Natural killer cell (primary cell): ENCODE measurements at regions of chr11 and their contacts with region 1.

Region 1: GRCh38 chr11:14519917-14520746 is at the start of gene PSMA1:
- DNase-seq: peak; percentile 86 to 94
- ATAC-seq: peak; percentile 90 to 98 (median 94)
- H3K4me3 ChIP-seq: peak within 1 kb of the TSS; percentile 77
- H3K4me3 Mint-ChIP-seq: peak within 1 kb of the TSS; percentile 97
- H3K27ac ChIP-seq: peak within 1 kb of the TSS; percentile 87
- H3K27ac Mint-ChIP-seq: peak within 1 kb of the TSS; percentile 95 to 97
- H3K4me1 ChIP-seq: peaks cover 6% of the 10 kb centered on the region
- H3K4me1 Mint-ChIP-seq: peaks cover 26 to 28% of the 10 kb centered on the region in 2 donors
- H3K27me3 ChIP-seq: no peaks in the 10 kb centered on the region
- H3K27me3 Mint-ChIP-seq: no peaks in the 10 kb centered on the region
- CTCF ChIP-seq: no peak
- total RNA-seq, gene PSMA1: 143 to 176 (median 155) TPM

Region 2: DNA sequence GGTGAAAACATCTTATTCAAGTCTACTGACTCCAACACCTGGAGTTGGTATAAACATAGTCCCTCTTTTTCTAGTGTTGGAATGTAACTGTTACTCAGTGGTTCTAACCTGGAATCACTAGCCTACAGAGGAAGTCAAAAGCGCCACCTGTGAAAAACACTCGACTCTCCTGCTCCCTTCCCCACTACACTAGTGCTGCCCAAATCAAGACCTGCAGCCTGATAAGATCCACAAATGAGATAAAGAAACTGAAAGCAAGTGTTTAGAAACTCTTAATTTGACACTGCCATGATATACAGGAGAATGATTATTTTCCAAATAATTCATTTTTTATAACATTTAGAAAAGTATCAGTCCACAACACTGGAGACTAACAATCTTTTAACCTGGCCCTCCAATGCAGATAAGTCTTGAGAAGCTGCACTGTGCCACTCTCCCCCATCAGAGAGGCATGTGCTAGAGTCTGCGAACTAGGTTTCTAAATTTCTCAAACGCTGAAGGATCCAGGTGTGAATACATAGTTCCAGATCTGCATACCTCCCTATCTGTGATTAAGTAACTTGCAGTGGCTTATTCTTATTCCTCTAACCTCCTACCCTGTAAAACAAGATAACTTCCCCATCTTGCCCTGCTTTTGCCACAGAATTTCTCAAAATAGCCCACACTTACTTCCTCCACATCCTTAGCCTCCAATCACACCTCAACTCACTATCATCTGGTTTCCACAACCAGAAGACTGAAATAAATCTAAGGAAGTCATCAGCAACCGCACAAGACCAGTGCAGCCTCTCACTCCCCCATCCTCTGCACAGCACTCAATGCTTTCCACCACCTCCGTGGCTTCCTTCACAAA is 249.2 kb before region 1 on chr11:
- intact Hi-C with region 1: no loop called
- DNase-seq: peak in 1 of 2 donors; percentile 47
- ATAC-seq: peak; percentile 72 to 81 (median 76)
- H3K4me3 ChIP-seq: no peak overlapping the region
- H3K4me3 Mint-ChIP-seq: peak overlapping the region; percentile 78
- H3K27ac ChIP-seq: peak overlapping the region; percentile 28
- H3K27ac Mint-ChIP-seq: peak overlapping the region; percentile 49 to 80
- H3K4me1 ChIP-seq: peaks cover 20% of the 10 kb centered on the region
- H3K4me1 Mint-ChIP-seq: peaks cover 28 to 48% of the 10 kb centered on the region in 2 donors
- H3K27me3 ChIP-seq: no peaks in the 10 kb centered on the region
- H3K27me3 Mint-ChIP-seq: no peaks in the 10 kb centered on the region
- CTCF ChIP-seq: no peak

Region 3: DNA sequence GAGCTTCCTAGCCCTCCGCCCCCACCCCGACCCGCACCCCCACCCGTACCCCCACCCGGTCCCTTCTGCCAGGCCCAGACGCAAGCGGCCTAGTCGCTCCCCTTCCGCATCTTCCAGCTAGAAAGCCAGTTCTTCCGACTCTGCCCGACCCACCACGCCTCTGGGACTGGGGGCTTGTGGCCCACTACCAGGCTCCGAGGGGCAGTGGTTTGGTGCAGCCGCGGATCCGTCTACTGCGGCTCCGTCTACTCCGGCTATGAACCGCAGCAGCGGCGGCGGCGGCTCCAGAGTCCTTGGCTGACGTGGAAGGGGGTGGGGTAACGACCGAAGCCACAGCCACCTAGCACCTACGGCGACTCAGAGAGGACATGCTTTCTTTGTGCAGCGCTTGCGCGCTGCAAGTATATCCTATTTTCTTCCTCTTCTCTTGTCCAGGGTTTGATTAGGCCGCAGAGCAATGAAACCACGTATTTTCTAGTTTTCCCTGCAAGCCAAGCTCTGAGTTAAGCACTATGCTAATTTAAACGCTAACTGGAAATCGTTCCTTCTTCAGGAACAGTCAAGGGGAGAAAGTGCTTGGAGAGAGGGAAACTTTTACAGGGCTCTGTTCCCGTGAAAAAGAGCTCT is 20.5 kb before region 1 on chr11 and contains the start of gene COPB1:
- intact Hi-C with region 1: loop called (anchors 1 kb)
- DNase-seq: peak; percentile 93 to 96
- ATAC-seq: peak; percentile 91 to 98 (median 94)
- H3K4me3 ChIP-seq: peak within 1 kb of the TSS; percentile 94
- H3K4me3 Mint-ChIP-seq: peak within 1 kb of the TSS; percentile 98
- H3K27ac ChIP-seq: peak within 1 kb of the TSS; percentile 89
- H3K27ac Mint-ChIP-seq: peak within 1 kb of the TSS; percentile 96 to 97
- H3K4me1 ChIP-seq: peaks cover 4% of the 10 kb centered on the region
- H3K4me1 Mint-ChIP-seq: peaks cover 36 to 46% of the 10 kb centered on the region in 2 donors
- H3K27me3 ChIP-seq: no peaks in the 10 kb centered on the region
- H3K27me3 Mint-ChIP-seq: no peaks in the 10 kb centered on the region
- CTCF ChIP-seq: no peak
- total RNA-seq, gene COPB1: 77.1 to 83.8 (median 80.4) TPM

Region 4: GRCh38 chr11:14566331-14567063 is 46.4 kb after region 1 on chr11:
- intact Hi-C with region 1: no loop called
- DNase-seq: no peak
- ATAC-seq: no peak
- H3K4me3 ChIP-seq: no peak overlapping the region
- H3K4me3 Mint-ChIP-seq: no peak overlapping the region
- H3K27ac ChIP-seq: no peak overlapping the region
- H3K27ac Mint-ChIP-seq: no peak overlapping the region
- H3K4me1 ChIP-seq: peaks cover 10% of the 10 kb centered on the region
- H3K4me1 Mint-ChIP-seq: peaks cover 16 to 22% of the 10 kb centered on the region in 2 donors
- H3K27me3 ChIP-seq: no peaks in the 10 kb centered on the region
- H3K27me3 Mint-ChIP-seq: no peaks in the 10 kb centered on the region
- CTCF ChIP-seq: no peak

Region 5: DNA sequence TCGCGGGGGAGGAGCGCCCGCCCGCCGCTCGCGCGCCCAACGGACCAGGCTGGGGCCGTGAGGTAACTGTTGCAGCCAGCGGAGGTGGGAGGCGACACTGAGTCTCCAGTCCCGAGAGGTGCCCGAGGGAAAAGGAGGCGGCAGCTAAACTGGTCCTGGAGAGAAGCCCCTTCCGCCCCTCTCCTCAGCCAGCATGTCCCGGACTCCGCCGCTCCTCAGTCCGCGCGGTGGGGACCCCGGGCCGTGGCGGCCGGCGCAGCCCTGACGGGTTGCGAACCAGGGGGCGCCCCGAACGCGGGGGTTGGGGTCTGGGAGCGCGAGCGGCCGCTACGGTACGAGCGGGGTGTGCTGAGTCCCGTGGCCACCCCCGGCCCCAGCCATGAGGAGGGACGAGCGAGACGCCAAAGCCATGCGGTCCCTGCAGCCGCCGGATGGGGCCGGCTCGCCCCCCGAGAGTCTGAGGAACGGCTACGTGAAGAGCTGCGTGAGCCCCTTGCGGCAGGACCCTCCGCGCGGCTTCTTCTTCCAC is 123.6 kb after region 1 on chr11 and contains the start of gene PDE3B:
- intact Hi-C with region 1: loop called (anchors 5 kb)
- DNase-seq: peak; percentile 66 to 83
- ATAC-seq: peak; percentile 79 to 88 (median 80)
- H3K4me3 ChIP-seq: peak within 1 kb of the TSS; percentile 87
- H3K4me3 Mint-ChIP-seq: peak within 1 kb of the TSS; percentile 81
- H3K27ac ChIP-seq: peak within 1 kb of the TSS; percentile 70
- H3K27ac Mint-ChIP-seq: peak within 1 kb of the TSS in 1 of 2 donors; percentile 86
- H3K4me1 ChIP-seq: peaks cover 12% of the 10 kb centered on the region
- H3K4me1 Mint-ChIP-seq: peaks cover 21 to 31% of the 10 kb centered on the region in 2 donors
- H3K27me3 ChIP-seq: peaks cover 35% of the 10 kb centered on the region
- H3K27me3 Mint-ChIP-seq: peaks cover 11 to 38% of the 10 kb centered on the region in 2 donors
- CTCF ChIP-seq: no peak
- total RNA-seq, gene PDE3B: 18.2 to 42.3 (median 34.5) TPM

Region 6: DNA sequence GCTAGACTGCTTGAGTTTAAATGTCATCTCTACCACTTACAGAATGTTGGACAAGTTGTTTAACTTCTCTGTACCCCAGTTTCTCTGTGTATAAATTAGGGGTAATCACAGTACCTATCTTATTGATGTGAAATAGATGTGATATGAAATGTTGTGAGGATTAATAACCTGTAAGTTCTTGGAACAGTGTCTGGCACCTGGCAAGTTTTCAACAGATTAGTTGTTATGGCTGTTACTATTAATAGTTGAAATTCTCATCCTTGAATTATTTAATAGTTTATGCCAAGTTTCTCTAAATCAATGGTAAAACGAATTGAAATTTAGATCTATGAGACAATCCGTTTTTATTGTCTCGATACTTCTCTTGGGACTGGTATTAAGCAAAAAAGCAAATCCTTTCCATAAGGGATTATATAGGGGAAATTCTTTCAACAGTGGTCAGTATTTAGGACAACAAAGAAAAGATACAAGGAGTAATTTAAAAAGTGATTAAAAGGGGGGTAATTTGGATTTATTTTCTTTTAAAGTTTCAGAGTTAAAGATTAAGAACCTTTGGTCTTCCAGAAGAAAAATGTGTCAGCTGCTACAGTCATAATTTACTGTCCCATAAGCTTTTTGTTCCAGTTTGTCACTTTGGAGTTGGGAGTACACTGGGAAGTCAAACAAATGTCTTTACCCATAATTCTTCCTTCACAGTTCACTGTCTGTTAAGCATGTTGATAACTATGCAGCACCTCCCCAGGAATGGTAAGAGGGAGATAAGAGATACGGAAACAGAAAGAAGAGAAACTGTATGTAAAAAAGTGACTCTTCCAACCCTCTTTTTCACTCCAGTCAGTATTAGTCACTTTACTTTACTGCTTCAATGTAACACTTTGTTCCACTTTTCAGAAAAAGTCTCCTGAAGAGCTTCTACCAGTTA is 136.7 kb after region 1 on chr11:
- intact Hi-C with region 1: no loop called
- DNase-seq: no peak
- ATAC-seq: no peak
- H3K4me3 ChIP-seq: no peak overlapping the region
- H3K4me3 Mint-ChIP-seq: no peak overlapping the region
- H3K27ac ChIP-seq: no peak overlapping the region
- H3K27ac Mint-ChIP-seq: no peak overlapping the region
- H3K4me1 ChIP-seq: no peaks in the 10 kb centered on the region
- H3K4me1 Mint-ChIP-seq: peaks cover 0 to 7% of the 10 kb centered on the region in 2 donors
- H3K27me3 ChIP-seq: no peaks in the 10 kb centered on the region
- H3K27me3 Mint-ChIP-seq: peaks cover 0 to 29% of the 10 kb centered on the region in 2 donors
- CTCF ChIP-seq: no peak